Activated T-helper 1 cell treated with anti-CD3 and anti-CD28 coated beads, Interleukin-12 subunit alpha, Interleukin-12 subunit beta, Interleukin-2, Interleukin-4 antibody, amounts not matched to agents 30 ng/mL and 10 ng/mL and 1 ng/mL, durations not matched to agents 14 hours and 24 hours and 36 hours (primary cell): ENCODE measurements at regions of chr7 and their contacts with region 1.

Region 1: GRCh38 chr7:24979863-24980533 is at the start of gene OSBPL3:
- DNase-seq: peak; percentile 91
- H3K4me3 Mint-ChIP-seq: peak within 1 kb of the TSS; percentile 96
- H3K27ac Mint-ChIP-seq: peak within 1 kb of the TSS; percentile 96
- H3K4me1 Mint-ChIP-seq: peaks cover 58% of the 10 kb centered on the region
- H3K27me3 Mint-ChIP-seq: peaks cover 2% of the 10 kb centered on the region
- total RNA-seq, gene OSBPL3: 90.6 and 101 TPM in 2 replicates

Region 2: GRCh38 chr7:24572997-24573625 is 406.9 kb before region 1 on chr7 and contains the start of gene PALS2:
- intact Hi-C with region 1: loop called (anchors 5 kb)
- DNase-seq: peak; percentile 77
- H3K4me3 Mint-ChIP-seq: peak within 1 kb of the TSS; percentile 94
- H3K27ac Mint-ChIP-seq: peak within 1 kb of the TSS; percentile 84
- H3K4me1 Mint-ChIP-seq: peaks cover 29% of the 10 kb centered on the region
- H3K27me3 Mint-ChIP-seq: peaks cover 41% of the 10 kb centered on the region
- total RNA-seq, gene PALS2: 34.9 and 42.2 TPM in 2 replicates

Region 3: GRCh38 chr7:24907311-24907886 is 72.6 kb before region 1 on chr7:
- intact Hi-C with region 1: loop called (anchors 1 kb)
- DNase-seq: peak; percentile 38
- H3K4me3 Mint-ChIP-seq: no peak overlapping the region
- H3K27ac Mint-ChIP-seq: no peak overlapping the region
- H3K4me1 Mint-ChIP-seq: peaks cover 48% of the 10 kb centered on the region
- H3K27me3 Mint-ChIP-seq: no peaks in the 10 kb centered on the region

Region 4: GRCh38 chr7:25028370-25029021 is 48.5 kb after region 1 on chr7:
- intact Hi-C with region 1: loop called (anchors 1 kb)
- DNase-seq: peak; percentile 13
- H3K4me3 Mint-ChIP-seq: peak overlapping the region; percentile 12
- H3K27ac Mint-ChIP-seq: peak overlapping the region; percentile 93
- H3K4me1 Mint-ChIP-seq: peaks cover 40% of the 10 kb centered on the region
- H3K27me3 Mint-ChIP-seq: peaks cover 12% of the 10 kb centered on the region

Region 5: GRCh38 chr7:25125137-25125946 is 145.3 kb after region 1 on chr7 and contains the start of gene CYCS:
- intact Hi-C with region 1: loop called (anchors 1 kb)
- DNase-seq: peak; percentile 100
- H3K4me3 Mint-ChIP-seq: peak within 1 kb of the TSS; percentile 93
- H3K27ac Mint-ChIP-seq: peak within 1 kb of the TSS; percentile 99
- H3K4me1 Mint-ChIP-seq: peaks cover 29% of the 10 kb centered on the region
- H3K27me3 Mint-ChIP-seq: no peaks in the 10 kb centered on the region
- total RNA-seq, gene CYCS: 280 TPM in 2 replicates